Thyroid gland (tissue), 4 donors: ENCODE measurements at regions of chr17 and their contacts with region 1.

Region 1: GRCh38 chr17:49997791-49998703 is 3.0 kb upstream of the DLX3 start:
- DNase-seq: peak; percentile 83 to 91
- H3K4me3 ChIP-seq: no peak overlapping the region
- H3K27ac ChIP-seq: no peak overlapping the region
- H3K4me1 ChIP-seq: peaks cover 26 to 45% of the 10 kb centered on the region in 2 donors
- H3K27me3 ChIP-seq: no peaks in the 10 kb centered on the region
- CTCF ChIP-seq: peak; percentile 80 to 98 (median 96)
- POLR2A ChIP-seq: no peak

Region 2: GRCh38 chr17:49567871-49568694 is 430.0 kb before region 1 on chr17:
- intact Hi-C with region 1: loop called (anchors 5 kb)
- DNase-seq: peak; percentile 93 to 94
- H3K4me3 ChIP-seq: peak overlapping the region in 1 of 3 donors; percentile 38
- H3K27ac ChIP-seq: peak overlapping the region; percentile 41 to 83 (median 72)
- H3K4me1 ChIP-seq: peaks cover 14 to 35% of the 10 kb centered on the region in 2 donors
- H3K27me3 ChIP-seq: no peaks in the 10 kb centered on the region
- CTCF ChIP-seq: peak; percentile 88 to 99 (median 95)
- POLR2A ChIP-seq: no peak

Region 3: DNA sequence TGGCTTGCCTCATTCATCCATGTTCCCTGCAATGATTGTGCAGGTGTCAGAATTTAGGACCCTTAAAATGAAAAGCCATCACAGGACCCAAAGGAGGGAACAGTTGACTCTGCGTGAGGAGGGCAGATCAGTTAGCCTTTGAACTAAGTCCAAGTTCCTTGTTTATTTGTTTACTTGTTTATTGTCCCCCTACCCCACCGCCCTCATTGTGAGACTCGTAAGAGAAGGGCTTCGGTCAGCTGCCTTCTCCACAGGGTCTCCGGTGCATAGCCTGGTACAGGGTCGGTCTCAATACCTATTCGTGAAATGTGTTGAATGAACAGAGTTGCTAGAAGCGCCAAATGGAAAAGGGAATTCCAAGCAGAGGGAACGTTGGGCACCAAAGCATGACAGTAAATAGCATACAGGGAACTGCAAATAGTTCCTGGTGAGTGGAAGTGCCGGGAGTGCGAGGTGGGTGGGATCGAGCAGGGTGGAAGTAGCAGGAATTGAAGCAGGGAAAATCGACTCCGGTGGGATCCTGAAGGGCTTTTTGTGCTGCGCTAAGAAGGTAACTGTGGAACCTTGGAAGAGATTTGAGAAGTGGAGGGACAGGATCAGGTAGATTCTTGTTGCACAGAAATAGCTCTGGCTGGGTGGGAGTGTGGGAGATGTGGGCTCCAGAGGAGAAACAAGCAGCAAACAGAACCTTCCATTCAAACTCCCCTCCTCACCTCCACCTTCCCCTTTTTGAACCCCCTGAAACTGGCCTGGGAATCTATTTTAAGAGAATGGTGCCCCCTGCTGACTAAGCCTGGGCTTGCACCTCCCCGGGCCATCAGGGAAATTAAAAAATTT is 303.0 kb before region 1 on chr17:
- intact Hi-C with region 1: loop called (anchors 10 kb)
- DNase-seq: peak; percentile 62 to 64
- H3K4me3 ChIP-seq: no peak overlapping the region
- H3K27ac ChIP-seq: no peak overlapping the region
- H3K4me1 ChIP-seq: peaks cover 0 to 16% of the 10 kb centered on the region in 2 donors
- H3K27me3 ChIP-seq: no peaks in the 10 kb centered on the region
- CTCF ChIP-seq: peak; percentile 84 to 99 (median 93)
- POLR2A ChIP-seq: no peak

Region 4: DNA sequence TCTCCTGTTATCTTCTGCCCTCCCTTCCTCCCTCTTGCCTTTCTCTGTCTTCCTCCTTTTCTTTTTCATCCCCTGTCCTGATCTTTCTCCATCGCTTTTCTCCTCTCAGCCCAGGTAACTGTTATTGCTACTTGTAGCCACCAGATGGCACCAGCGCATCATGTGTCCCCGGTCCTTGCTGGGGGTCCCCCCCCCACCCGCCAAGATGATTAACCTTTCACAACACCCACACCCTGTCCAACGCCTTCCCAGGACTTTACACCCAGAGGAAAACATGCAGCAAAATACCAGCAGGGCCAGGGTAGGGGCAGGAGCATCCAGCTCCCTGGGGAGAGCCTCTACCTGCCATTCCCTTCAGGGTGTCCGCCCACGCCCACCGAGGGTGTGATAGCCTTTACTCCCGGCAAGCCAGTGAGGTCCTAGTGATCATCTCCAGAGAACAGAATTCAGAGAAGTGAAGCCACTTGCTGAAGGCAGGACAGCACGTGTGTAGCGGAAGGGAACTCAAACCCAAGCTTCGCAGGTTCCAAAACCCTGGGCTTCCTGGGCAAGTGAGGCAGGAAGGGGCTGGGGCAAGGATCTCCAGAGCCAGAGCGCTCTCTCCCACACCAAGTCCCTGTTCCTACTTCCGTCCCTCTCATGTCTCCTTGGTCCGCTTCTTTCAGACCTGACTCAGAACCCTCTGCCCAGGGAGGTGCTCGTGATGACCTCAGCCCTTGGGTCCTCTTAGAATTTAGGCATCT is 136.7 kb before region 1 on chr17:
- intact Hi-C with region 1: loop called (anchors 2 kb)
- DNase-seq: peak; percentile 57 to 60
- H3K4me3 ChIP-seq: no peak overlapping the region
- H3K27ac ChIP-seq: no peak overlapping the region
- H3K4me1 ChIP-seq: peaks cover 0 to 7% of the 10 kb centered on the region in 2 donors
- H3K27me3 ChIP-seq: no peaks in the 10 kb centered on the region
- CTCF ChIP-seq: peak; percentile 63 to 99 (median 83)
- POLR2A ChIP-seq: no peak

Region 5: GRCh38 chr17:49880291-49881053 is 117.6 kb before region 1 on chr17:
- intact Hi-C with region 1: loop called (anchors 5 kb)
- DNase-seq: peak; percentile 80 to 83
- H3K4me3 ChIP-seq: no peak overlapping the region
- H3K27ac ChIP-seq: no peak overlapping the region
- H3K4me1 ChIP-seq: peaks cover 16 to 26% of the 10 kb centered on the region in 2 donors
- H3K27me3 ChIP-seq: no peaks in the 10 kb centered on the region
- CTCF ChIP-seq: peak; percentile 89 to 100 (median 99)
- POLR2A ChIP-seq: no peak